ENCODE measurements at regions of chr11 and their contacts with region 1.

Region 1: GRCh38 chr11:8033305-8034105 is 46.4 kb downstream of the EIF3F start:
- DNase-seq: peak; percentile 40
- H3K4me3 ChIP-seq: no peak overlapping the region
- H3K27ac ChIP-seq: no peak overlapping the region
- H3K4me1 ChIP-seq: no peaks in the 10 kb centered on the region
- CTCF ChIP-seq: peak; percentile 89

Region 2: GRCh38 chr11:8018484-8019313 is 14.8 kb before region 1 on chr11:
- CTCF ChIA-PET with region 1: interaction called, 18 read pairs
- POLR2A ChIA-PET with region 1: no interaction called
- intact Hi-C with region 1: no loop called
- DNase-seq: no peak
- H3K4me3 ChIP-seq: no peak overlapping the region
- H3K27ac ChIP-seq: no peak overlapping the region
- H3K4me1 ChIP-seq: no peaks in the 10 kb centered on the region
- CTCF ChIP-seq: no peak

Region 3: GRCh38 chr11:8055091-8055835 is 21.8 kb after region 1 on chr11:
- CTCF ChIA-PET with region 1: no interaction called
- POLR2A ChIA-PET with region 1: no interaction called
- intact Hi-C with region 1: no loop called
- DNase-seq: no peak
- H3K4me3 ChIP-seq: no peak overlapping the region
- H3K27ac ChIP-seq: no peak overlapping the region
- H3K4me1 ChIP-seq: no peaks in the 10 kb centered on the region
- CTCF ChIP-seq: no peak

Region 4: DNA sequence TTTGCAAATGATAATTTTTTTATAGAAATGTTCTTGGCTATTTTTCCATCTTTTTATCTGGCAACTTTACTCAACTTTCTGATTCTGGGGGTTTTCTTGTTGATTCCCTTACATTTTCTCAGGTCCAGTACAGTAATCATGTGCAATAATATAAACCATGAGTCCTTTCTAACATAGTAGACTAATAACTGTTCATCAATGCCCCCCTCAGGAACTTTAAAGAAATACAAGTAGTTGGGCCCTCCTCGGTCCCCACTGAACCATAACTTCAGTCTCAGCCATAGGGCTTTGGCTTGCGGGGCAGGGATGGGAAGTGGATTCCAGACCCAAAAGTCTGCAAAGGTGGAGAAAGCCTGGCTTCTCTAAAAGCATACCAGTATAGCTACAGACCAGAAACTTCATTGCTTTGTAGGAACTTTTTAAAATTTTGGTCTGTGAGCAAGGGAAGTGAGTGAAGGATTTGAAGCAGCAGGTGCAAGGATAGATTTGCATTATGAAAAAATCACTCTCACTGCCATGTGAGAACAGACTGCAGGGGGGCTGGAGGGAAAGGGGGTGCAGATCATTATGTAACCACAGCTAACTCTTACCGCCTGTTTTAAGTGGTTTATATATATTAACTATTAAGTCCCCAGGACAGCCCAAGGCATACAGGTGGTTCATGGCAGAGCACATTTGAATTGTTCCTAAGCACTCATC is 37.1 kb after region 1 on chr11:
- CTCF ChIA-PET with region 1: interaction called, 4 read pairs
- POLR2A ChIA-PET with region 1: no interaction called
- intact Hi-C with region 1: loop called (anchors 5 kb)
- DNase-seq: peak; percentile 33
- H3K4me3 ChIP-seq: no peak overlapping the region
- H3K27ac ChIP-seq: no peak overlapping the region
- H3K4me1 ChIP-seq: peaks cover 5% of the 10 kb centered on the region
- CTCF ChIP-seq: peak; percentile 74

Region 5: DNA sequence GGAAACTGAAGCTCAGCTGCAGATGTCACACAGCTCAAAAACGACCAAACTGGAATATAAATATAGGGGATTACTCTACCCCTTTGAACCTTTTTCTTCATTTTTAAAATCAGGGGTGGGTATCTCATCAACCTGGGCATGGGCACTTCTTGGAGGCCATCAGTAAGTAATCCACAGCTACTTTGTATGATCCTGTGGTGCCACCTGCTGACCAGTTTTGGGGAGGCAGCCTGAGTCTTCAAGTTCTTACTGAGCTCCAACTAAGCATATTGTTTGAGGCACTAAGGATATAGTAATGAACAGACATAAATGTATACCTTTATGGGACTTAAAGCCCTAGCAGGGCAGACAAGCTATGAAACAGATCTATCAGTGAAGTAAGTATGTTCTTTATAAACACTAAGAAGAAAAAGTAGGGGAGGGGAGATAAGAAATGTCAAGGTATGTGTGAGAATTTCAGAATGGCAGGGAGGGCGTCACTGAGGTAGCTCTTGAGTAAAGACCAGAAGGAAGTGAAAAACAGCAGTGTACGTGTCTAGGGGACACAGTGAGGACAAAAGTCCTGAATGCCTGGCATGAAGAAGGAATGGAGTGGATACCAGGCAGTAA is 65.9 kb after region 1 on chr11:
- CTCF ChIA-PET with region 1: interaction called, 10 read pairs
- POLR2A ChIA-PET with region 1: interaction called, 3 read pairs
- intact Hi-C with region 1: loop called (anchors 1 kb)
- DNase-seq: peak; percentile 70
- H3K4me3 ChIP-seq: no peak overlapping the region
- H3K27ac ChIP-seq: no peak overlapping the region
- H3K4me1 ChIP-seq: no peaks in the 10 kb centered on the region
- CTCF ChIP-seq: peak; percentile 95

Measured in OCI-LY7 (cell line).